Activated naive CD4-positive, alpha-beta T cell treated with anti-CD3 and anti-CD28 coated beads for 36 hours (primary cell): ENCODE measurements at regions of chr10 and their contacts with region 1.

Region 1: GRCh38 chr10:8053446-8054290 is 820 bp upstream of the GATA3 start:
- DNase-seq: peak; percentile 94
- H3K4me3 Mint-ChIP-seq: peak overlapping the region; percentile 76
- H3K27ac Mint-ChIP-seq: peak overlapping the region; percentile 77
- H3K4me1 Mint-ChIP-seq: peaks cover 43% of the 10 kb centered on the region
- H3K27me3 Mint-ChIP-seq: peaks cover 20% of the 10 kb centered on the region

Region 2: DNA sequence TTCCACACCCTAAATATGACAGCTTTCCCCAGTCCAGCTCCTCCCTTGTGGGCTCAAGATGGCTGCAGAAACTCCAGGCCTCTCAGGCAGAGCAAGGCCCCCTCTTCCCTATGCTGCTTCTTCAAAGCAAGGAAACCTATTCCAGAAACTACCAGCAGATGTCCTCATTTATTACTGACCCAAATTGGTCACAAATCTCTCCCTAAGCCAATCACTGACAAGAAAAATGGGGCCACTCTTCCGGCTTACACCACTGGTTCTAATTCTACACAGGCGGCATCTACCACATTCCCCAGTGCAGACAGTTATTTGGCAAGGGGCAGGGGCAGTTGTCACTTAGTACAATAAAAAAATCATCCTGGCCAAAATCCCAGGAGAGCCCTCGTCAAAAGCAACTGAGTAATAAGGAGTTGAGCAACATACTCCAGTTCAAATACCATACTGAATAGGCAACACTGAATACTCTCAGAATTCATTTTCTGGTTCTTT is 793.2 kb before region 1 on chr10:
- CTCF ChIA-PET with region 1: no interaction called
- intact Hi-C with region 1: loop called (anchors 10 kb)
- DNase-seq: peak; percentile 20
- H3K4me3 Mint-ChIP-seq: no peak overlapping the region
- H3K27ac Mint-ChIP-seq: peak overlapping the region; percentile 21
- H3K4me1 Mint-ChIP-seq: peaks cover 62% of the 10 kb centered on the region
- H3K27me3 Mint-ChIP-seq: no peaks in the 10 kb centered on the region

Region 3: DNA sequence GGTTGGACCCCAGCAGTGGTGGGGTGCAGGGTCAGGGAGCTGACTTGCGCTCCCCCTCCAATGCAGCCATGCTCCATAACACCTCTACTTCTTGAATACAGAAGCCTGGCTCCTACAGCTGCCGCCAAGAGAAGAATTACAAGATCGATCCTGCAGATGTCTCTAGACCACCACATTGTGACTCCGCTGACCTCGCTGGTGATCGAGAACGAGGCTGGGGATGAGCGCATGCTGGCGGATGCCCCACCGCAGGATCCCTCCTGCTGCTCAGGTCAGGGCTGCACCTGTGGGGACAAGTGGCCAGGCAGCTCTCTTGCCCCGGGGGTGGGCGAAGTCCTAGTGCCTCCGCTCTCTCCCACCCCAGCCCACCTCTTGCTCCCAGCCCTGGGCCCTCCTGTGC is 318.8 kb before region 1 on chr10:
- CTCF ChIA-PET with region 1: no interaction called
- intact Hi-C with region 1: no loop called
- DNase-seq: no peak
- H3K4me3 Mint-ChIP-seq: no peak overlapping the region
- H3K27ac Mint-ChIP-seq: no peak overlapping the region
- H3K4me1 Mint-ChIP-seq: no peaks in the 10 kb centered on the region
- H3K27me3 Mint-ChIP-seq: no peaks in the 10 kb centered on the region

Region 4: GRCh38 chr10:7818295-7819122 is 235.2 kb before region 1 on chr10 and contains the start of gene TAF3:
- CTCF ChIA-PET with region 1: no interaction called
- intact Hi-C with region 1: loop called (anchors 2 kb)
- DNase-seq: peak; percentile 95
- H3K4me3 Mint-ChIP-seq: peak within 1 kb of the TSS; percentile 94
- H3K27ac Mint-ChIP-seq: peak within 1 kb of the TSS; percentile 62
- H3K4me1 Mint-ChIP-seq: peaks cover 28% of the 10 kb centered on the region
- H3K27me3 Mint-ChIP-seq: no peaks in the 10 kb centered on the region
- total RNA-seq, gene TAF3: 12.6 to 12.8 TPM

Region 5: DNA sequence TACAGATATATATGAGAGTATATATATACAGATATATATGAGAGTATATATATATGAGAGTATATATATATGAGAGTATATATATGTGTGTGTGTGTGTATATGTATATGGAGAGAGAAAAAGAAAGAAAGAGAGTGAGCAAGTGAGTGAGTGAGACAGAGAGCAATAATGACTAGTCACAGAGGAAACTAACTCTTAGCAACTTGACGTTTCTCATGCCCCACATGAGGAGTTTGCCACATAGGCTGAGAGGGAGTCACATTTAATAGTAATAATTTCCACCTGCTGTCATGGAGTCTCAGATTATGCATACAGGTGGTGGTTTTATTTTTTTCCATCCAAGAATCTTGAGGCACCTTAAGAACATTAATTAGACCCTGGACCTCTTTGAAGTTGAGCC is 200.7 kb after region 1 on chr10:
- CTCF ChIA-PET with region 1: no interaction called
- intact Hi-C with region 1: no loop called
- DNase-seq: peak; percentile 40
- H3K4me3 Mint-ChIP-seq: no peak overlapping the region
- H3K27ac Mint-ChIP-seq: peak overlapping the region; percentile 73
- H3K4me1 Mint-ChIP-seq: peaks cover 23% of the 10 kb centered on the region
- H3K27me3 Mint-ChIP-seq: no peaks in the 10 kb centered on the region

Region 6: GRCh38 chr10:8331883-8332729 is 278.4 kb after region 1 on chr10:
- CTCF ChIA-PET with region 1: no interaction called
- intact Hi-C with region 1: loop called (anchors 2 kb)
- DNase-seq: peak; percentile 80
- H3K4me3 Mint-ChIP-seq: peak overlapping the region; percentile 75
- H3K27ac Mint-ChIP-seq: no peak overlapping the region
- H3K4me1 Mint-ChIP-seq: peaks cover 20% of the 10 kb centered on the region
- H3K27me3 Mint-ChIP-seq: peaks cover 13% of the 10 kb centered on the region

Region 7: GRCh38 chr10:8473205-8473604 is 419.5 kb after region 1 on chr10:
- CTCF ChIA-PET with region 1: no interaction called
- intact Hi-C with region 1: loop called (anchors 1 kb)
- DNase-seq: peak; percentile 13
- H3K4me3 Mint-ChIP-seq: no peak overlapping the region
- H3K27ac Mint-ChIP-seq: no peak overlapping the region
- H3K4me1 Mint-ChIP-seq: peaks cover 2% of the 10 kb centered on the region
- H3K27me3 Mint-ChIP-seq: peaks cover 3% of the 10 kb centered on the region

Region 8: DNA sequence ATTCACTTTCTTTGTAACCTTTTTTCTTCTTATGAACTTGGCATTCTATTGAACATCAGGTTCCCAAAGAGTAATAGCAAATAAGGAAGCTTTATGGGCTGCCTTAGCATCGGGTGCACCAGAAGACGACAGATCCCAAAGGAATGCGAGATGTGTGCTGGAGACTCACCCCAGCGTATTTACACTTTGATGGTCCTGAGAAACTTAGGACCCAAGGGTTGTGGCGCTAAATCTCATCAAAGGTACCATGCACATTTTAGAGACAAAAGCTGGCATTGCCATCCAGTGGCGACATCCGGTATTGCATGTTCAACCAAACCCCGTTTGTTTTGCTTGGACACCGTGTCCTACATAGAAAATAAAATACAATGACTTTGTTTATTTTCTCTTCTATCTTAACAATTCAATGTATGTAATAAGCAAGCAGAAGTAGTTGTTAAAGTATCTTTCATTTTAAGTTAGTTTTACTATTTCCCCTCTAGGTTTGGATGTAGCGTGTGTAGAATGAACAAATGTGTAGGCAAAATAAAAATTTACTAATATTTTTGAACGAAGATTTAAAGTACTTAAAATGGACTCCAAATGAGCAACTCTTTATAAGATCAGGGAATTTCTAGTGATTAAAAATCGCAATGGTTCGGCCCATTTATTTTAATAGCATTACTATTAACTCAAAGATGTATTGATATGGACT is 1155.6 kb after region 1 on chr10:
- CTCF ChIA-PET with region 1: no interaction called
- intact Hi-C with region 1: loop called (anchors 1 kb)
- DNase-seq: peak; percentile 86
- H3K4me3 Mint-ChIP-seq: no peak overlapping the region
- H3K27ac Mint-ChIP-seq: no peak overlapping the region
- H3K4me1 Mint-ChIP-seq: peaks cover 3% of the 10 kb centered on the region
- H3K27me3 Mint-ChIP-seq: peaks cover 2% of the 10 kb centered on the region